GM12878 (cell line): ENCODE measurements at regions of chr12 and their contacts with region 1.

Region 1: GRCh38 chr12:18861287-18861858 is 123.5 kb downstream of the CAPZA3 start:
- DNase-seq: no peak
- ATAC-seq: peak; percentile 42; the same call in 1 of the 3 replicates
- H3K4me3 ChIP-seq: no peak overlapping the region
- H3K27ac ChIP-seq: no peak overlapping the region
- H3K4me1 ChIP-seq: no peaks in the 10 kb centered on the region
- H3K27me3 ChIP-seq: no peaks in the 10 kb centered on the region
- CTCF ChIP-seq: peak; percentile 22 to 33 (median 29); a peak in 2 of 6 replicates
- EP300 ChIP-seq: no peak
- POLR2A ChIP-seq: no peak
- RAD21 ChIP-seq: no peak

Region 2: DNA sequence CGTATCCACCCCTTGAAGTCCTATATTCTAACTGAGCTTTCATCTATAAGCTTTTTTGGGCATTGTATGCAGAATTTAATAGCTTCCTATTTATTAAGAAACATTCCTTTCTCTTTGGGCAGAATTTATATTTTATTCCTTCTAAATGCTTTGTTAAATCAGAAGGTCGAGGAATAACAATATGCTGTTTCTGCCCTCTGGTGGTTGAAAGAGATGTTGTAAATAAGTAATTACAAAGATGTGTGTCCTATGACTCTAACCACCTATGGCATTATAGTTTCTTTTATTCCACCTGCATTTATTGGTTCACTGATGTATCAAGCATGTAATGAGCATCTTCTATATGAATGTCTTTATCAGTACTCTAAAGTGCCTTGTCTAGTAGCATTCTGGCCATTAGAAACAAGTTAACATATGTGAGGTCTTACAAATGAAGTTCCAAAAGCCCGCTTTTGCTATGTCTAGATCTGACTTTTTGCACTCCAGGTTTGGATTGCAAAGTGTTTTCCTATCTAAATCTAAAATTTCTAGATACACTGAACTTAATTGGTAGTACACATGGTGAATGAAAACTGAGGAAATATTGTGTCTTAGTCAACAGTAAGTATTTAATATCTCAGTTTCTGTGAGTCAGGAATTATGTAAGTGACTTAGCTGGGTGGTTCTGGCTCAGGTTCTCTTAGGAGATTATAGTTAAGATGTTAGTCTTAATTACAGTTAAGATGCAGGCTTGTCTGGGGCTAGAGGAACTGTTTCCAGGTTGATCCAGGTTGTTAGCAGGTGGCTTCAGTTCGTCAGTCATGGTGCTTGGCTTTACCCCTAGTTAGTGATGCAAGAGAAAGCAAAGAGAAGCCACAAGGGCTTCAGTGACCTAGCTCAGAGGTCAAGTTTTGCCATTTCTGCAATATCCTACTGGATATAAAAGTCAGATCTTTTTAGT is 325.6 kb after region 1 on chr12:
- CTCF ChIA-PET with region 1: interaction called, 20 read pairs
- POLR2A ChIA-PET with region 1: no interaction called
- RAD21 ChIA-PET with region 1: interaction called, 4 read pairs
- SMC1A ChIA-PET with region 1: interaction called, 17 read pairs
- in situ Hi-C with region 1: no loop called
- intact Hi-C with region 1: loop called (anchors 1 kb)
- DNase-seq: no peak
- ATAC-seq: peak; percentile 53; the same call in 2 of the 3 replicates
- H3K4me3 ChIP-seq: no peak overlapping the region
- H3K27ac ChIP-seq: no peak overlapping the region
- H3K4me1 ChIP-seq: no peaks in the 10 kb centered on the region
- H3K27me3 ChIP-seq: no peaks in the 10 kb centered on the region
- CTCF ChIP-seq: peak in 2 of 3 experiments; percentile 40 to 52; a peak in 4 of 6 replicates
- EP300 ChIP-seq: no peak
- POLR2A ChIP-seq: no peak
- RAD21 ChIP-seq: peak; percentile 63

Region 3: GRCh38 chr12:19288603-19289244 is 427.4 kb after region 1 on chr12:
- CTCF ChIA-PET with region 1: interaction called, 5 read pairs
- POLR2A ChIA-PET with region 1: no interaction called
- RAD21 ChIA-PET with region 1: no interaction called
- SMC1A ChIA-PET with region 1: no interaction called
- in situ Hi-C with region 1: no loop called
- intact Hi-C with region 1: loop called (anchors 1 kb)
- DNase-seq: no peak
- ATAC-seq: peak; percentile 69
- H3K4me3 ChIP-seq: no peak overlapping the region
- H3K27ac ChIP-seq: no peak overlapping the region
- H3K4me1 ChIP-seq: no peaks in the 10 kb centered on the region
- H3K27me3 ChIP-seq: no peaks in the 10 kb centered on the region
- CTCF ChIP-seq: peak; percentile 46 to 59 (median 58); a peak in 5 of 6 replicates
- EP300 ChIP-seq: no peak
- POLR2A ChIP-seq: no peak
- RAD21 ChIP-seq: peak; percentile 45; the same call in 1 of the 2 replicates